Activated CD4-positive, alpha-beta memory T cell treated with anti-CD3 and anti-CD28 coated beads for 36 hours (primary cell): ENCODE measurements at regions of chr9 and their contacts with region 1.

Region 1: DNA sequence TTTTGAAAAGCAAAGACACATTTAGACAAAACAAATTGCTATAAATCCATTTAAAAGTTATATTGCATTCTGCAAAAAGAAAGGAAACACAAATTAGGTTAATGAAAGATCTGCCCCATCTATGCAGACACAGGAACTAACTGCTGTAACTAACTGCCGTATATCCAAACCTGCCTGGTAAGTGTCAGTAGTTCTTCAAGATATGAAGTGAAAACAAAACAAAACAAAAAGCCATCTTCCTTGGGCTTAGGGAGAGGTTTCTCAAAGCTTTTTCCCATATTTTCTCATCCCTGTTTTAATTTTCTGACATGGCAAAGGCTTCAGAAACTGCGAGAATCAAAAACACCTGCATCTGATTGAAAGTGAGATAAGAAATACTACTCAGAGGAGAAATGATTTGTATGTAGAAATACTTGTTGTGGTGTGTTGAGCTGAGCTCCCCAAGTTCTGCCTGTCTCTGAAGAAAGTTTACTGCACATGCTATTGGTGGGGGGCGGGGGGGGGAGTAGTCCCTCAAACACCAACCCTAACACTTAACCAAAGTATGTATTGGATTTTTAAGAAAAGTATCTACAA is 750.5 kb downstream of the PTPRD start:
- DNase-seq: no peak
- H3K4me3 Mint-ChIP-seq: no peak overlapping the region
- H3K27ac Mint-ChIP-seq: no peak overlapping the region
- H3K4me1 Mint-ChIP-seq: no peaks in the 10 kb centered on the region
- H3K27me3 Mint-ChIP-seq: no peaks in the 10 kb centered on the region

Region 2: GRCh38 chr9:9817176-9817575 is 45.1 kb before region 1 on chr9:
- CTCF ChIA-PET with region 1: no interaction called
- POLR2A ChIA-PET with region 1: no interaction called
- intact Hi-C with region 1: loop called (anchors 10 kb)
- DNase-seq: no peak
- H3K4me3 Mint-ChIP-seq: no peak overlapping the region
- H3K27ac Mint-ChIP-seq: no peak overlapping the region
- H3K4me1 Mint-ChIP-seq: no peaks in the 10 kb centered on the region
- H3K27me3 Mint-ChIP-seq: no peaks in the 10 kb centered on the region

Region 3: GRCh38 chr9:10008101-10008799 is 145.9 kb after region 1 on chr9:
- CTCF ChIA-PET with region 1: no interaction called
- POLR2A ChIA-PET with region 1: no interaction called
- intact Hi-C with region 1: no loop called
- DNase-seq: no peak
- H3K4me3 Mint-ChIP-seq: no peak overlapping the region
- H3K27ac Mint-ChIP-seq: no peak overlapping the region
- H3K4me1 Mint-ChIP-seq: no peaks in the 10 kb centered on the region
- H3K27me3 Mint-ChIP-seq: no peaks in the 10 kb centered on the region